Common myeloid progenitor, CD34-positive (primary cell): ENCODE measurements at regions of chr1 and their contacts with region 1.

Region 1: DNA sequence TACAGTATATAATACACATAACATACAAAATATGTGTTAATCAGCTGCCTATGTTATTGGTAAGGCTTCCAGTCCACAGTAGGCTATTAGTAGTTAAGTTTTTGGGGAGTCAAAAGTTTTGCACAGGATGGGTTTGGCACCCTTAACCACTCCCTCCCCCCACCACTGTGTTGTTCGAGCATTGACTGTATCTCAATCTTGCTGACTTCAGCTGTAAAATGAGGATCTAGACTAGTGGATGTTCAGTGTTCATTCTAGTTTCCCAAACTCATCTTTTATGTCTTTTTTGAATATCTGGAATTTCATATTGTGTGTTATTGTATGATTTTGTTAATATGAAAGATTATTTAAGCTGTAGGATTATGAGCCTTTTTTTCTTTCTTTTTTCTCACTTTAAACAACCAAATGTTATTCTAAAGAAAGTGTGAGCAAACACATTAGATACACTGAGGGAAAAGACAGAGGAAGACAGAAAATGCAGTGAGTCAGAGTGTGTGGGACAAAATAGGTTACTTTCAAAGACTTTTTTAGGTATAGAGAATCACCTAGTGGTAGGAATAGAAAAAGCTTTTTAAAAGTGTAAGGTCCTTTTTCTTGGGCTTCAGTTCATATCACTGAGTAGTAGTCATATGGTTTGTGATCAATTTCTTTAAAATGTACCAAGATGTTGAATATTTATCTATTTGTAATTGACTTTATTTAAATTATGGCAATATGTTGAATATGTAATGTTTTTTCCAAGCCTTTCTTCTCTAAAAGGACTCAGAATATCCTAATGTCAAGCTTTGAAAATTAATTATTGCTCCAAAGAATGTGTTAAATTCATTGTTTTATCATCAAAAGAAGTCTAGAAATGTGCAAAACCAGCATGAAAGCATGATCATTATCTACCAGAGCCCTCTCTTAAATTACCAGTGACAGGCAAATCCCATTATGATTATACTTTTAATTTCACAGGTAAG is 17.9 kb upstream of the CENPF start:
- DNase-seq: peak; percentile 20 to 51 (median 49)
- H3K4me3 ChIP-seq: no peak overlapping the region
- H3K27ac ChIP-seq: no peak overlapping the region
- H3K4me1 ChIP-seq: peaks cover 0 to 6% (median 2%) of the 10 kb centered on the region in 4 experiments
- H3K27me3 ChIP-seq: no peaks in the 10 kb centered on the region

Region 2: DNA sequence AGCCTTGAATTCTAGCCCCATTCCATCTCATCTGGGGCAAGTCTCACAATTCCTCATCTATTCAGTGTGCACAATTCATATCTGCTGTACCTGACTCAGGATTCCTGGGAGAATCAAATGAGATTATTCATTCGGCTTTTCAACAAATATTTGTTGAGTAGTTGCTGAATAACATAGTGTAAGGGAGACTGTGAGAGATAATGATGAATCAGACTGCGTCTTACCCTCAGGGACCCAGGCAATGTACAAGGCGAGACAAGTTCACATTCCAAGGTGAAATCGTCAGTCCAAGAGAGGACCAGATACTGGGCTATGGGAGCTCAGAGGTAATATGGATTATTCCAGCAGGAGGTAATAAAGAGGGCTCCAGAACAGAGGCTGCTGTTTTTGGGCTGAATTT is 371.9 kb before region 1 on chr1:
- CTCF ChIA-PET with region 1: interaction called, 15 read pairs
- POLR2A ChIA-PET with region 1: no interaction called
- DNase-seq: no peak
- H3K4me3 ChIP-seq: no peak overlapping the region
- H3K27ac ChIP-seq: no peak overlapping the region
- H3K4me1 ChIP-seq: peaks cover 0 to 6% (median 5%) of the 10 kb centered on the region in 4 experiments
- H3K27me3 ChIP-seq: peaks cover 0 to 12% (median 6%) of the 10 kb centered on the region in 5 experiments

Region 3: DNA sequence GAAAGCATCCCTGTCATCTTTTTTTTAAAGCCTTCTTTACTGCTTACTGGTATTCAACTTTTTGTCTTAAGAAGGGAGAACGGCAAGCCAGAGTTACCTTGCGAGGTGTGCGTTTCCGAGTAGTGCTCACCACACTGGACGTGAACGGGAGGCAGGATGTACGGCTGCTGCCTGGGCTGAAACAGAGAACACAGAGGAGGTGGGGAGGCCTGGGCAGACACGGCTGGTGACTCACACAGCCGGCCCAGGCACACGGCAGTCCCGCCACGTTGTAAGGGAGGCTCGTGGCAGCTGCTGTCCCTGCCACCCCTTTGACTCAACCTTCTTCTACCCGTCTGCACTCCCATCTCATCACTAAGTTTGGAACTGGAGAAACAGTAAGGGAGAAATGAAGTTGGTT is 198.3 kb before region 1 on chr1:
- CTCF ChIA-PET with region 1: interaction called, 56 read pairs
- POLR2A ChIA-PET with region 1: no interaction called
- DNase-seq: no peak
- H3K4me3 ChIP-seq: no peak overlapping the region
- H3K27ac ChIP-seq: no peak overlapping the region
- H3K4me1 ChIP-seq: no peaks in the 10 kb centered on the region
- H3K27me3 ChIP-seq: no peaks in the 10 kb centered on the region

Region 4: GRCh38 chr1:214573386-214574358 is 11.4 kb before region 1 on chr1:
- CTCF ChIA-PET with region 1: interaction called, 13 read pairs
- POLR2A ChIA-PET with region 1: no interaction called
- DNase-seq: no peak
- H3K4me3 ChIP-seq: no peak overlapping the region
- H3K27ac ChIP-seq: no peak overlapping the region
- H3K4me1 ChIP-seq: no peaks in the 10 kb centered on the region
- H3K27me3 ChIP-seq: no peaks in the 10 kb centered on the region

Region 5: DNA sequence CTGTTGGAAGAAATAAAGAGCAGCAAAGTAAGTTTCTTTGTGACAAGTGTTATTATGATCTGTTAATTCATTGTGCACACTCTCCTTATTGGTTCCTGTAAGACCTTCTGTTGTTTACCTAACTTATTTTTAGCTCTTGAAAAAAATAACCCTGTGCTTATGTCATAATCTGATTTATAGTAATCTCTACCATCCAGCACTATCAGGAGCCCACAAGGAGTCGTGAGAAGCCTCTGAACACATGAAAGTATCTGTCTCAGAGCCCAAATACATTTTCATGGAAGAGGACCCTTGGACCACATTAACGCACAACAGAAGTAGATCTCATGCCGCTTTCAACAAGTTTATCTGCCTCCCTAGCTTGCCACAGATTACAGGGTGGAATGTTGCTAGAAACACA is 63.7 kb after region 1 on chr1:
- CTCF ChIA-PET with region 1: no interaction called
- POLR2A ChIA-PET with region 1: no interaction called
- DNase-seq: no peak
- H3K4me3 ChIP-seq: no peak overlapping the region
- H3K27ac ChIP-seq: no peak overlapping the region
- H3K4me1 ChIP-seq: no peaks in the 10 kb centered on the region
- H3K27me3 ChIP-seq: no peaks in the 10 kb centered on the region